Posterior vena cava (tissue), 2 donors: ENCODE measurements at regions of chr11 and their contacts with region 1.

Region 1: DNA sequence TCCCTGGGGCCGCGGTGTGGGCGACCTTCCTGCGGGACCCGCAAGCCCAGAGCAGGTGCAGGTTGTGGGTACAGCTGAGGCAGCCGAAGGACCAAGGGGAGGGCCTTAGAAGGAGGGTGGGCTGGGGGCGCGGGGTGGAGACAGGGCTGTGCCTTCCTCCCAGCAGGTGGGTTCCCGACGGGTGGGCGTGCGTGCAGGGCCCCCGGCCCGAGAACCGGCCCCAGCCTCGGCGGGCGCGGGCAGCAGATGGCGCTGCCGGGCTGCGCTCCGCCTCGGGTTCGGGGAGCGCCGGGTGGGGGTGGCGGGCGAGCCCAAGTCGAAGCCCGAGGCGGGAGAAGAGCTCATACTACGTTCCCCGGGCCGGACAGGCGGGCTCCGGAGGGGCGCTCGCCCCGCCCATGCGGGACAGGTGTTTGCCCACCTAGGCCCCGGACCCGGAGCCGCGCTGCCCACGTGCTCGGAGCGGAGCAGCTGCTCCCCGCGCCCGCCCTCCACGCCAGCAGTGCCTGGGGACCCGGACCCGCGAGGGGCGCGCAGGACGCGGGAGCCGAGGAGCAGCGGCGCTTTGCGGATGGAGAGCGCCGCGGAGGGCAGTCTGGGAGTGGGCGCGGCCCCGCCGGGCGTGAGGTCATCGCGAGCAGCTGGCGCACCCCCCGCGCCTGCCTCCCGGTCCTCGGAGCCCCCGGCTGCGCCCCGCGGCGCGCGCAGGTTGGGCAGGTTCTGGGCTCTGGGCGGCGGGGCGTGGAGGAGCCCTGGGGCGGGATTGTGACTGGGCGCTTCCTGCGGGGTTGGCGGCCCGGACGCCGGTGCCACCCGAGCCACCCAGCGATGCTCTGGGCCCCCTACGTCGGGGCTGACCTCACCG is 25.3 kb downstream of the DUSP8 start:
- DNase-seq: no peak

Region 2: GRCh38 chr11:1502954-1503707 is 43.6 kb before region 1 on chr11:
- intact Hi-C with region 1: no loop called
- DNase-seq: no peak

Region 3: GRCh38 chr11:1572197-1573076 is 25.7 kb after region 1 on chr11 and contains the start of gene DUSP8:
- intact Hi-C with region 1: loop called (anchors 1 to 2 kb)
- DNase-seq: peak; percentile 96
- total RNA-seq, gene DUSP8: 11.0 to 19.4 TPM